ENCODE measurements at regions of chr14 and their contacts with region 1.

Region 1: DNA sequence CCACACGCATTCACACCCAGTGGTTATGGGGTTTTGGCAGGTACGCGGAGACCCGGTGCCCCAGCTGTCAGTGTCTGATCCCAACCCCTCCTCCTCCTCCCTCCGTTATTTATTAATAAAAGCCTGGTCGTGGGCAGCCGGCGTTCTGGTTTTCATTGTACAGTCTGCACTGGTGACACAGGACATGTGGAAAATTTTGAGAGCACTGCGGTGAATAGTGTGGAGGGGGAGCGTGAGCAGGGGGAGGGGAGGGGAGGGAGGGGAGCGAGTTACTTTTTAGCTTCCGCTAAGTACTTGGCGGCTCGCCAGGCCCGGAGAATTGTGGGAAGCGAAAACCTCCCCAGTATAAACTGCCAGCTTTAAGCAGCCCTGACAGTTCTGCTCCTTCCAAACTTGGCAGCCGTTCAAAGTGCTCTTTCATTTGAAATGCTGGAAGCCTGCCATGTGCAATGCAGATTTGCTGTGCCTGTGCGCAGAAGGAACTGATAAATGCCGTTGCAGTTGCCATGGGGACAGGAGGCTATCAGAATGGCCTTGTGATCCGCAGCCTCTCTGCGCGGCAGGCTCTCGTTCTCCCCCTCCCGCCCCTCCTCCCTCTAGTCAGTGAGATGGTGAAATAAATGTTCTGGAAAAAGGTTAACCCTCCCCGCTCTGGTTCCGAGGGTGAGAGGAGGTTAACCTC is 11.7 kb upstream of the IRF2BPL start:
- DNase-seq: peak; percentile 92
- H3K4me3 Mint-ChIP-seq: peak overlapping the region; percentile 63
- H3K27ac Mint-ChIP-seq: peak overlapping the region; percentile 100
- H3K4me1 Mint-ChIP-seq: peaks cover 87% of the 10 kb centered on the region
- H3K27me3 Mint-ChIP-seq: no peaks in the 10 kb centered on the region

Region 2: DNA sequence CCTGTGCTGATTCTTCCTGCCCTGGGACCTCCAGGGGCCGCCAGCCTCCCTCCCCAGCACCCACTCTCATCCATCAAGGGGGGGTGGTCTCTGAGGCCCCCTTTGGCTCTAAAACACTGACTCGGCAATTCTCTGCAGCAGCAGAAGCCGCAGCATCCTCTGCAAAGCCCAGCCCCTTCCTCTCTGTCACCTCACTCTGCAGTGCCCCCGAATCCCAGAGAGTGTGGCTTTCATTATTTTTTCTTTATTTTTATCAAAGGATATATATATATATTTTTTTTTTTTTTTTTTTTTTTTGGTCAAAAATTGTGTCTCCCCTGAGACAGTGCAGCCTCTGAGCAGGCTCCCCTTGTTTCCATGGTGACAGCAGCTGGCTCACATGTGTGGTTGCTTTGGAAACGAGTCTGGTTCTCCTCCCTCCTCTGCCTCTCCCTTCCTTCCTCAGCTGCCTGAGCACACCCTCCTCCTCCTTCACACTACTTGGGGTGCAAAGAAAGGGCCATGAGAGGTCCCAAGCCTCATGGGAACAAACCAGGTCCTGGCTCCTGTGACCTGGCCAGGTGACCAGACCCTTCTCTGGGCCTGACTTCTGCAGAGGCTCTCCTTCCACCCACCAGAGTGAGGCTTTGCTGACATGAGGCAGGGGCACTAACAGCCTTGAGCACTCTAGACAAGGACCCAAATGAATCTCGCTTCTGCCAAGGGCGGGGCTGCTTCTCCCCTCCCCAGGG is 113.5 kb before region 1 on chr14:
- CTCF ChIA-PET with region 1: no interaction called
- POLR2A ChIA-PET with region 1: interaction called, 12 read pairs
- DNase-seq: peak; percentile 77
- H3K4me3 Mint-ChIP-seq: peak overlapping the region; percentile 41
- H3K27ac Mint-ChIP-seq: peak overlapping the region; percentile 90
- H3K4me1 Mint-ChIP-seq: peaks cover 83% of the 10 kb centered on the region
- H3K27me3 Mint-ChIP-seq: peaks cover 7% of the 10 kb centered on the region

Region 3: GRCh38 chr14:76947078-76947837 is 92.9 kb before region 1 on chr14:
- CTCF ChIA-PET with region 1: interaction called, 12 read pairs
- POLR2A ChIA-PET with region 1: interaction called, 7 read pairs
- DNase-seq: peak; percentile 82
- H3K4me3 Mint-ChIP-seq: no peak overlapping the region
- H3K27ac Mint-ChIP-seq: peak overlapping the region; percentile 54
- H3K4me1 Mint-ChIP-seq: peaks cover 53% of the 10 kb centered on the region
- H3K27me3 Mint-ChIP-seq: no peaks in the 10 kb centered on the region

Region 4: GRCh38 chr14:76968621-76969063 is 71.6 kb before region 1 on chr14:
- CTCF ChIA-PET with region 1: no interaction called
- POLR2A ChIA-PET with region 1: no interaction called
- DNase-seq: no peak
- H3K4me3 Mint-ChIP-seq: no peak overlapping the region
- H3K27ac Mint-ChIP-seq: no peak overlapping the region
- H3K4me1 Mint-ChIP-seq: peaks cover 16% of the 10 kb centered on the region
- H3K27me3 Mint-ChIP-seq: peaks cover 43% of the 10 kb centered on the region

Region 5: GRCh38 chr14:77023001-77023996 is 16.9 kb before region 1 on chr14:
- CTCF ChIA-PET with region 1: interaction called, 28 read pairs
- POLR2A ChIA-PET with region 1: interaction called, 229 read pairs
- DNase-seq: peak; percentile 38
- H3K4me3 Mint-ChIP-seq: peak overlapping the region; percentile 61
- H3K27ac Mint-ChIP-seq: peak overlapping the region; percentile 84
- H3K4me1 Mint-ChIP-seq: peaks cover 46% of the 10 kb centered on the region
- H3K27me3 Mint-ChIP-seq: no peaks in the 10 kb centered on the region

Region 6: GRCh38 chr14:77028384-77029231 is 11.6 kb before region 1 on chr14 and contains the start of gene IRF2BPL:
- CTCF ChIA-PET with region 1: interaction called, 28 read pairs
- POLR2A ChIA-PET with region 1: interaction called, 229 read pairs
- DNase-seq: peak; percentile 95
- H3K4me3 Mint-ChIP-seq: peak within 1 kb of the TSS; percentile 88
- H3K27ac Mint-ChIP-seq: peak within 1 kb of the TSS; percentile 89
- H3K4me1 Mint-ChIP-seq: peaks cover 58% of the 10 kb centered on the region
- H3K27me3 Mint-ChIP-seq: no peaks in the 10 kb centered on the region
- total RNA-seq, gene IRF2BPL: 39.0 to 39.3 TPM

Region 7: GRCh38 chr14:77053046-77053841 is 13.0 kb after region 1 on chr14:
- CTCF ChIA-PET with region 1: interaction called, 19 read pairs
- POLR2A ChIA-PET with region 1: interaction called, 6 read pairs
- DNase-seq: peak; percentile 71
- H3K4me3 Mint-ChIP-seq: no peak overlapping the region
- H3K27ac Mint-ChIP-seq: no peak overlapping the region
- H3K4me1 Mint-ChIP-seq: peaks cover 24% of the 10 kb centered on the region
- H3K27me3 Mint-ChIP-seq: peaks cover 2% of the 10 kb centered on the region

Region 8: DNA sequence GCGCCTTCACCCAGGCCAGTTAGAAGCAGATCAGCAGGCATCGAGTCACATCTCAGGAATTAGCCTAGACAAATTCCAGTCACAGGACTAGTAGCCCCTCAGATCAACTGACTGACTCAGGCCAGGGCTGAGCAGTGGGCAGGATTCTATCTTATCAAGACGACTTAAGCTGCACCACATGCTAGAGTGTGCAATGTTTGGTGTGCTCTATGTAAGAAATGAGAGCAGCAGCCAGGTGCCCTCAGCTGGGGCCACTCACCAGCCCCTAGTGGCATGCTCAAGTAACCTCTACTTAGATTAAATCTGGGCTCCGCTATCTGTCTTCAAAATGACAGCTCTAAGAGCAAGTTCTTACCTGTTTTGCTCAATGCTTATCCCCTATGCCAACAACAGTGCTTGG is 250.5 kb after region 1 on chr14:
- CTCF ChIA-PET with region 1: no interaction called
- POLR2A ChIA-PET with region 1: no interaction called
- DNase-seq: no peak
- H3K4me3 Mint-ChIP-seq: no peak overlapping the region
- H3K27ac Mint-ChIP-seq: no peak overlapping the region
- H3K4me1 Mint-ChIP-seq: no peaks in the 10 kb centered on the region
- H3K27me3 Mint-ChIP-seq: no peaks in the 10 kb centered on the region

Measured in activated CD4-positive, alpha-beta memory T cell treated with anti-CD3 and anti-CD28 coated beads, Interleukin-2, amount 10 ng/mL, durations not matched to agents 7 days and 5 days (primary cell).